ENCODE measurements at regions of chr19 and their contacts with region 1.

Region 1: DNA sequence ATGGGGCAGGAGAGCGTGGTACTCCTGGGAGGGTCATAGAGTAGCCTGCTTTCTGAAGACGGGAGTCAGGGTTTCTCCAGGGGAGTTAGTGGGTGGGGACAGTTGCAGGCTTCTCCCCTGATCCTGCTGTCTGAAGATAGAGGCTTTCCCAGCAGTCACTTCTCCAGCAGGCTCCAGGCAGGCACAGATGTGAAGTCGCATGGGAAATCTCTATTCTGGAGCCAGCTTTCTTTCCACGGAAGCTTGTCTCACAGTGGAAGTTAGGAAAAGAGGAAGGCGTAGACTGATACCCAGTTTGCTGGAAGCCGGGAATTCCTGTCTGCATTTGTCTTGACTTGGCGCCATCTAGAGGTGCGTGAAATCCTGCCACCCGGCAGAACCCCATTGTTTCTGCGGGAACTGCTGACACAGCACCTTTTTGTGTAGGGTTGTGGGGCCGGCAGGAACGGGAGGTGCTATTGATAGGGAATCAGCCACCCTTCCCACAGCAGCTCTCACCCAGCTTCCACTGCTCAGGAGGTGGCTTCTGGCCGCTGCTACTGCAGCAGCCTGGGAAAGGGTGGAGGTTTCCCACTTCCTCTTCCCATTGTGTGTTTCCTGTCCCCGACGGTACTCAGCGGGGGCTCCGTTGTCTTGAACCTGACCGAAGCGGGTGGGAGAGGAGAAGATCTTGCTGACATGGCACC is 28.5 kb upstream of the NPAS1 start:
- DNase-seq: peak; percentile 74
- H3K4me3 ChIP-seq: no peak overlapping the region
- H3K27ac ChIP-seq: no peak overlapping the region
- H3K27me3 ChIP-seq: no peaks in the 10 kb centered on the region
- CTCF ChIP-seq: peak; percentile 95

Region 2: DNA sequence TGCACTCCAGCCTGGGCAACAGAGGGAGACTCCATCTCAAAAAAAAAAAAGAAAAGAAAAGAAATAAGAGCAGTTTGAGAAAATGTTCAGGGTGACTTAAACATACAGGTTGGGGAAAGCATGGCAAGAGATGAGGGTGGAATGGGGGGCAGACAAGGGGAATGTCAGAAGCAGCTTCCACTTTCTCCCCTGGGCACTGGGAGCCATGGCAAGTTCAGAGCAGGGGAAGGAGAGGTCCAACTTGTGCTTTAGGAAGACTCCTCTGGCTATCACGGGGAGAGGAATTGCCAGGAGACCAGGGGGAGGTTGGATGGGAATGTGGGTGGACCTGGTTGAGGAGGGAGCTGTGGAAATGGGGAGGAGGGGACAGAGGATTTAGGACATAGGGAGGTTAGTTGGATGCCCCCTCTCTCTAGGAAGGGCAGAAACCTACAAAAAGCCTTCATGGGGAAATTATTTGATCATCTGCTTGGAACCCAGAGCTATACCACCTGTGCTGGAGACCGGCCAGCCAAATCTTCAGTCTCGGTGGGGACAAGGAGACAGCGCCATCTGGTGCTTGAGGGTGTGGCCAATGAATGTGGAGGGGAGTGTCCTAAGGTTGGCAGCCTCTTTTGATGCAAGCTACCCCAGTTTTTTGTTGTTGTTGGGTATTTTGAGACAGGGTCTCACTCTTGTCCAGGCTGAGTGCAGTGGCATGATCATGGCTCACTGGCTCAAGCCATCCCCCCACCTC is 237.5 kb before region 1 on chr19:
- CTCF ChIA-PET with region 1: interaction called, 30 read pairs
- POLR2A ChIA-PET with region 1: no interaction called
- DNase-seq: no peak
- H3K4me3 ChIP-seq: no peak overlapping the region
- H3K27ac ChIP-seq: no peak overlapping the region
- H3K27me3 ChIP-seq: no peaks in the 10 kb centered on the region
- CTCF ChIP-seq: peak; percentile 46

Region 3: DNA sequence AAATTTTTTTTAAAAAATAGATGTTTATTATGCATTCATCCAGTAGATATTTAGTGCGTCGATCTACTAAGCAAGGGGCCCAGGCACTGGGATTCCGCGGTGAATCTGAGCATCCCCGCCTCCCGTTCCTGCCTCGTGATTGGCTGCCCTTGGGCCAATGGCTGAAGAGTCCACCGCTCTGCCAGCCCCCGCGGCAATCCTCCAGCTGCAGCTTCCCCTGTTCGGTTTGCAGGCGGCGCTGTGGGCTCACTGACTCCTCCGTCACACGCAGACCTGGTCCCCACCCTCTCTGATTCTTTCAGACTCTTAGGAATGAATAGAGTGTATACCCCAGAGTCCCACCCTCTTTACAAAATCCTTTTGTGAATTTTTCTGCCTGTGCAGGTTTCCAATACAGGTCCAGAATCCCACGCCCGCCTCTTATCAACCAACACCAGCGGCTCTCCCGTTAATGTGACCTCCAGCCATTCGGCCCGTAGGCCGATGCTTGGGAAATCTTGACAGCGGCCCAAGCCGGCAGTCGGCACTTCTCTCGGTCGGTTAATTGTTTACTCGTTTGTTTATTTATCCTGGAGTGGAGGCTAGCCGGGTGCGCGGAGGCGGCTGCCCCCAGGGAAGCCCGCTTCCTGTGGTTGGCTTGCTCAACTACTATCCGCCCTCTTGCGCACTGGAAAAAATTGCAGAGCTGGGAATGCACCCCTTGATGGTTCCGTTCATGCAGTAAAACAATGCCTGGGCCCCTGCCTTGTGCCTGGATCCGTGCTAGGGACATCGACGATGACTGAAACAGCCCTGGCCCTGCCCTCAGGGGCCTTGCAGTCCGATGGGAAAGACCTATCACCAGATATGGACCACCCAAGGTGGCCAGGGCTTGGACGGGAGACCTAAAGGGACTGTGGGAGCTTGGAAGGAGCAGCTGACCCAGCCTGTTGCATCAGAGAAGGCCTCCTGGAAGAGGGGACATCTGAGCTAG is 134.8 kb before region 1 on chr19:
- CTCF ChIA-PET with region 1: interaction called, 43 read pairs
- POLR2A ChIA-PET with region 1: interaction called, 9 read pairs
- DNase-seq: peak; percentile 89
- H3K4me3 ChIP-seq: peak overlapping the region; percentile 55
- H3K27ac ChIP-seq: peak overlapping the region; percentile 97
- H3K27me3 ChIP-seq: no peaks in the 10 kb centered on the region
- CTCF ChIP-seq: peak; percentile 85

Region 4: DNA sequence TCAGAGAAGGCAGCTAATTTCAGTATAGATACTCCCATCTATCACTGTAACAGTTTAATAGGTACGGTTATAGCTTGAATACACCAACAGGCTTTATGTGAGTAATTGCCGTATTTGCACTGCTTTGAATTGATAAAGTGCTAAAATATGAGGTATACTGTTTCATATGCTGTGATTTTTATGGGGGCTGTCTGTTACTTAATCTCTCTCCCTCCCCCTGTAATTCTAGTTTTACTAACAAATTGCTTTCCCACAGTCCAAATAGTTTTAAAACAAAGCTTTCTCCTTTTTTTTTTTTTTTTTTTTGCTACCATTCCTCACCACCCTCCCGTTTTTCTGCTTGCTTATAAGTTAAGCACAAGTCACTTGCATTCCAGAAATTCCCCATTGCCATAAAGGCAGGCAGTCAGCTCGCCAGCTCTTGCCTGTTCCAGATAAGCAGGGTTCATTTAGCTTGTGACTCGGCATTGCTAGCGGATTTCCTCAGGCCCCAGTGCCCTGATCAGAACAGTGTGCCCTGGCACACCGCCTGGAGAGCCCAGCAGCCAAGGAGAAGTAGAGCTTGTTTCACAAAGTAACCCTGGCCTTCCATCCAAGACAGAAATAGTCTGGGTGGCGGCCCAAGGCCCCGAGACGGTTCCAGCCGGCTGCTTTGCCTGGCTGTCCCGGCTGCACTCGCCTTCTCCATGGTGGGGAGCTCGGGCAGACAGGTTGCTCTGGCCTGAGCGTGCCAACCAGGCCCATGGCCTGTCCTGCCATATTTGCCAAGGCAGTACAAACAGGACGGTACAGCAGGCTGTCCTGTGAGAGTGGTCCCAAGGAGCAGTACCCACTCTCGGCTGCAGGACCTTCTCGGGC is 15.0 kb before region 1 on chr19:
- CTCF ChIA-PET with region 1: interaction called, 28 read pairs
- POLR2A ChIA-PET with region 1: no interaction called
- DNase-seq: peak; percentile 73
- H3K4me3 ChIP-seq: no peak overlapping the region
- H3K27ac ChIP-seq: peak overlapping the region; percentile 91
- H3K27me3 ChIP-seq: no peaks in the 10 kb centered on the region
- CTCF ChIP-seq: no peak

Region 5: DNA sequence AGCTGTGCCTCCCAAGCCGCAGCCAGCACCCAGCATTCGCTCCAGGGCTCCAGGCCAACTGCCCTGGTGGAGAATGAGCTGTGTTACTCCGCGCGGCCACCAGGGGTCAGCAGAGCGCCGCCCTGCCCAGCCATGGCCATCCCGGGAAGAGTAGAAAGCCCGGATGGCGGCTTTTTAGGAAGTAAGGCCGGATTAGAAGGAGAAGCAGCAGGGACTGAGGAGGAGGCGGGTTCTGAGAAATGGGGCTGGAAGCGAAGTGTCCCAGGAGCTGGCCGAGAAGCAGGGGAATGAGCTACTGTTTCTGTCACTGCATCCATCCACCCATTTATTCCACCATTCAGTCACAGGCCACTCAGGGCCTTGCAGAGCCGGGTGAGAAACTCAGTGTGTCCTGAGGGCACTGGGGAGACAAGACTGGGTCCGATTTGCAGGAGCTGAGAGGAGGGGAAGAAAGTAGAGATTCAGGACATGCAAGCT is 21.9 kb after region 1 on chr19:
- CTCF ChIA-PET with region 1: interaction called, 32 read pairs
- POLR2A ChIA-PET with region 1: no interaction called
- DNase-seq: peak; percentile 23
- H3K4me3 ChIP-seq: no peak overlapping the region
- H3K27ac ChIP-seq: peak overlapping the region; percentile 31
- H3K27me3 ChIP-seq: no peaks in the 10 kb centered on the region
- CTCF ChIP-seq: peak; percentile 97

Region 6: DNA sequence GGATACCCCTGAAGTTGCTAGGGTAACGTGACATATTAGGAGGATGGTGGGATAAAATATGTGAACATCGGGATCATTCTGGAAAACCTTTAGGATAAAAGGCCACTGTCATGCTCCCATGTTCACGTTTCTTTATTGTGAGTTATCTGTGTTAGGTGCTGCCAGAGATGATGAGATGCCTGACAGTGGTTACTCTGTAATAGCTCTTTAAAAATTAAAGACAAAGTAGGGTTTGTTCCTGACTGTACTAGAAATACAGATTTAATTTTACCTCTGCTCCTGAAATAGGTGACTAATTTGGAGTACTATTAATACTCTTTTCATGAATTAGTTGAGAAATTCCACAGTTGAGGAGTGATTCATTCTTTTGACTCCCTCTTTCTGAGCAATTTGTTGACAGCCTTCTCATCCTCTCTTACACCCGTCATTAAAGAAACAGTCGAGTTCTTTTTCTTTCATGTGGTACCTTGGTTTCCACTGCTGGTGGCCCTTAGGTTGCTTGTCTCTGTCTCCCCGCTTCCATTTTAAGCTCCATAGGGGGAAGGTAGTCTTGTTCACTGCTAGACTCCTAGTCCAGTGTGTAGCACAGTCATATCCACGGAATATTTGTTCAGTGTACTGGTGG is 167.9 kb after region 1 on chr19:
- CTCF ChIA-PET with region 1: no interaction called
- POLR2A ChIA-PET with region 1: no interaction called
- DNase-seq: no peak
- H3K4me3 ChIP-seq: no peak overlapping the region
- H3K27ac ChIP-seq: no peak overlapping the region
- H3K27me3 ChIP-seq: no peaks in the 10 kb centered on the region
- CTCF ChIP-seq: no peak

Region 7: DNA sequence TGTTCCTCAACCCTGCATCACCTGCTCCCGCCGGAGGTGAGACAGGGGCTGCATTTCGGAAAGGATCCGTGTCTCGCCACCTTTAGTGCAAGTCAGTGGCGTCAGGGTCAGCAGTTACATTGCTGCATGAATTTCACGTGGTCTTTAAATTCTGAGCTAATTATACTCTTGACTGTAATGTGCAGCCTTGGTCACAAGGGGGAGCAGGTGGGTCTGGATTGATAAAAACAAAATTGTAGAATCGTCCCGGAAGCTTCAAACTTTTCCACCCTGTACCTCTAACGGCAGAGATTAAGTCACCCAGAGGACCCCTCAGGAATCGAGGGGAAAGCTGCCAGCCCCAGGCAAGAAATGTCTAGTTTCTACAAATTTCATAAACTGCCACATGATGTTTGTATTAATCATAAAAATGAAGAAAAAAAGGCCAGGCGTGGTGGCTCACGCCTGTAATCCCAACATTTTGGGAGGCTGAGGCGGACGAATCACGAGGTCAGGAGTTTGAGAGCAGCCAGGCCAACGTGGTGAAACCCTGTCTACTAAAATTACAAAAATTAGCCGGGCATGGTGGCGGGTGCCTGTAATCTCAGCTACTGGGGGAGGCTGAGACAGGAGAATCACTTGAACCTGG is 219.7 kb after region 1 on chr19:
- CTCF ChIA-PET with region 1: no interaction called
- POLR2A ChIA-PET with region 1: no interaction called
- DNase-seq: peak; percentile 59
- H3K4me3 ChIP-seq: no peak overlapping the region
- H3K27ac ChIP-seq: peak overlapping the region; percentile 95
- H3K27me3 ChIP-seq: no peaks in the 10 kb centered on the region
- CTCF ChIP-seq: peak; percentile 84